ENCODE measurements at regions of chr11 and their contacts with region 1.

Region 1: GRCh38 chr11:128956401-128957201 is 13.9 kb upstream of the TP53AIP1 start:
- DNase-seq: peak; percentile 84
- H3K4me3 ChIP-seq: no peak overlapping the region
- H3K27ac ChIP-seq: no peak overlapping the region
- H3K4me1 ChIP-seq: no peaks in the 10 kb centered on the region
- H3K27me3 ChIP-seq: no peaks in the 10 kb centered on the region
- CTCF ChIP-seq: peak; percentile 85

Region 2: GRCh38 chr11:128164080-128164741 is 792.4 kb before region 1 on chr11:
- CTCF ChIA-PET with region 1: no interaction called
- POLR2A ChIA-PET with region 1: no interaction called
- intact Hi-C with region 1: loop called (anchors 10 kb)
- DNase-seq: no peak
- H3K4me3 ChIP-seq: no peak overlapping the region
- H3K27ac ChIP-seq: no peak overlapping the region
- H3K4me1 ChIP-seq: no peaks in the 10 kb centered on the region
- H3K27me3 ChIP-seq: peaks cover 50% of the 10 kb centered on the region
- CTCF ChIP-seq: no peak

Region 3: GRCh38 chr11:128884703-128885338 is 71.8 kb before region 1 on chr11:
- CTCF ChIA-PET with region 1: interaction called, 69 read pairs
- POLR2A ChIA-PET with region 1: no interaction called
- intact Hi-C with region 1: loop called (anchors 1 kb)
- DNase-seq: peak; percentile 81
- H3K4me3 ChIP-seq: no peak overlapping the region
- H3K27ac ChIP-seq: no peak overlapping the region
- H3K4me1 ChIP-seq: peaks cover 4% of the 10 kb centered on the region
- H3K27me3 ChIP-seq: peaks cover 6% of the 10 kb centered on the region
- CTCF ChIP-seq: peak; percentile 86

Region 4: GRCh38 chr11:128905345-128906184 is 51.0 kb before region 1 on chr11:
- CTCF ChIA-PET with region 1: interaction called, 17 read pairs
- POLR2A ChIA-PET with region 1: no interaction called
- intact Hi-C with region 1: no loop called
- DNase-seq: peak; percentile 71
- H3K4me3 ChIP-seq: peak overlapping the region; percentile 62
- H3K27ac ChIP-seq: no peak overlapping the region
- H3K4me1 ChIP-seq: peaks cover 6% of the 10 kb centered on the region
- H3K27me3 ChIP-seq: no peaks in the 10 kb centered on the region
- CTCF ChIP-seq: peak; percentile 70

Region 5: DNA sequence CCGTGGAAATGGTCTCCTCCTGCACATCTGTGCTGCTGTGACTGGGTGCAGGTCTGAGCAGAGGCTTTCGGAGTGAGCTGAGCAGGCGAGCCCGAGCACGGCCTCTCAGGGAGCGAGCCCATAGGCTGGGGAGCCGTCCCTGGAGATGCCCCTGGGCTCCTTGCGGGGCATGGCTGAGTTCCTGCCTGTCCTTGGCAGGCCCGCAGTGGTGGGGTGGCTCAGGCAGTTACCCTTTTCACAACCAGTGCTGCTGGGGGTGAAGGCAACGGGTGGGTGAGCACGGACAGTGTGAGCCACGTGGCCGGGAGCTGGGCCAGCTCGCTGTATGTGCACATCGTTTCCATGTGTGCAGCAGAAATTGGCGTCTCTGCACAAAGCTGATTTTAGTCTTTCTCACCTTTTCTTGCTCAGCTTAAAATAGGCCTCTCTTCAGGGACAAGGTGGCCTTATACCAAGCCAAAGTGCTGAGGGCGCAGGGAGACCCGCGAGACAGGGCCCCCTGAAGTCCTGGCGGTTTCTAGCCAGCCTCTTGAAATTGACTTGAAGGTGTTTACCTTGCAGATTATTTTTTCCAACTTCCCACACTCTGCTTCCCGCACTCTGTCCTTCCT is 13.7 kb before region 1 on chr11 and contains the start of gene TP53AIP1:
- CTCF ChIA-PET with region 1: interaction called, 16 read pairs
- POLR2A ChIA-PET with region 1: no interaction called
- intact Hi-C with region 1: no loop called
- DNase-seq: no peak
- H3K4me3 ChIP-seq: no peak within 1 kb of the TSS
- H3K27ac ChIP-seq: no peak within 1 kb of the TSS
- H3K4me1 ChIP-seq: no peaks in the 10 kb centered on the region
- H3K27me3 ChIP-seq: no peaks in the 10 kb centered on the region
- CTCF ChIP-seq: no peak
- total RNA-seq, gene TP53AIP1: 2.1 and 2.3 TPM in 2 replicates

Region 6: DNA sequence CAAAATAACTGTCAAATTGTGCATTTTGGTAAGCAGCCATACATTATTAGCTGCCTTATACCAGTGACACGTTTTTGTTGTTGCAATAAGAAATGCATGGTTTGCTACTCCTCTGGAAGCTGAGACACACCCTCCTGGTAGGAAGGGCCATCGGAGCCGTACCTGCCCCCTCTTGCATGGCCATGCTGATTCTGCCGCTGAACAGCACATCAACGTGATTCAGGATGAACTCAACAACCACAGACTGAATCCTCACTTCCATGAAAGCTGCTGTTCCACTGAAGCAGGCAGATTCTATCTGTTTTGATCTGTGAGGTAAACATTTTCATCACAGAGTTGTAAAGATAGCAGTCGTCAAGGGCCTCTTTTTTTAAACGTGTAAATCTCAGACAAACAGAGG is 24.7 kb after region 1 on chr11:
- CTCF ChIA-PET with region 1: no interaction called
- POLR2A ChIA-PET with region 1: no interaction called
- intact Hi-C with region 1: no loop called
- DNase-seq: no peak
- H3K4me3 ChIP-seq: no peak overlapping the region
- H3K27ac ChIP-seq: no peak overlapping the region
- H3K4me1 ChIP-seq: no peaks in the 10 kb centered on the region
- H3K27me3 ChIP-seq: no peaks in the 10 kb centered on the region
- CTCF ChIP-seq: no peak

Region 7: DNA sequence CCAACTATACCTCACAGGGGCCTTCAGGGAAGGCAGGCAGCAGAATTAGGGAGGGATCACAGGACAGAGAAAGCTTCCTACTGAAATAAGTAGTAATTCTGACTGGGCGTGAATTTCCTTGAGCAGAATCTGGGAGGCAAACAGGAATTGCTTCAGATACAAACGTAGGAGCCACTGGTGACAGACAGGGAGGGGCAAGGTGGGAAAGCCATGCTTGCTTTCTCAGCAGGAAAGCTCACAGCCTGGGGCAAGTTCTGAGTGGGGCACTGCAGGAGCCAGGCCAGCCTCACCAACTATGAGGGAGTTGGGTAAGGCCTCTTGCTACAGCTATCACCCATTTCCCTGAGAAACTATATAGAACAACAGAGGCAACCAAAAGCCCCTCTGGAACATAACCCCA is 191.9 kb after region 1 on chr11:
- CTCF ChIA-PET with region 1: no interaction called
- POLR2A ChIA-PET with region 1: no interaction called
- intact Hi-C with region 1: no loop called
- DNase-seq: no peak
- H3K4me3 ChIP-seq: no peak overlapping the region
- H3K27ac ChIP-seq: no peak overlapping the region
- H3K4me1 ChIP-seq: peaks cover 15% of the 10 kb centered on the region
- H3K27me3 ChIP-seq: no peaks in the 10 kb centered on the region
- CTCF ChIP-seq: no peak

Region 8: DNA sequence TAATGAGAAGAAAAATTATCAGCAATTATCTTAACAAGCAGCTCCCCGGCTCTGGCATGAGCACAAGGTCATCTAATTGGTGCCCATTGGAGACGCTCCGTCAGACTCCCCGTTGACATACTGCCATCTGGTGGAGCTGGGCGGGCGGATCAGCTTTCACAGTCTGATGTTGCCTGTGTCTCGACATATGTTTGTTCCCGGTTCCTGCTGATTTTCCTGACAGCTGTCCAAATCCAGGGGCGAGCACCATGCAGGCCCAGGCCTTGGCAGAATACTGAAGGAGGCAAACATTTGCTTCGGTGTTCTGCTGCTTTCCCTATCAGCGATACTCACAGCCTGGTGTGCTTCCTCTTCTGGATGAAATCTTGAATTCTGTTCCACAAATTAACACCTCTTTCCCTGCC is 375.3 kb after region 1 on chr11:
- CTCF ChIA-PET with region 1: no interaction called
- POLR2A ChIA-PET with region 1: no interaction called
- intact Hi-C with region 1: loop called (anchors 10 kb)
- DNase-seq: peak; percentile 91
- H3K4me3 ChIP-seq: no peak overlapping the region
- H3K27ac ChIP-seq: no peak overlapping the region
- H3K4me1 ChIP-seq: peaks cover 5% of the 10 kb centered on the region
- H3K27me3 ChIP-seq: no peaks in the 10 kb centered on the region
- CTCF ChIP-seq: peak; percentile 99

Measured in A673 (cell line).